OCI-LY7 (cell line): ENCODE measurements at regions of chr3 and their contacts with region 1.

Region 1: DNA sequence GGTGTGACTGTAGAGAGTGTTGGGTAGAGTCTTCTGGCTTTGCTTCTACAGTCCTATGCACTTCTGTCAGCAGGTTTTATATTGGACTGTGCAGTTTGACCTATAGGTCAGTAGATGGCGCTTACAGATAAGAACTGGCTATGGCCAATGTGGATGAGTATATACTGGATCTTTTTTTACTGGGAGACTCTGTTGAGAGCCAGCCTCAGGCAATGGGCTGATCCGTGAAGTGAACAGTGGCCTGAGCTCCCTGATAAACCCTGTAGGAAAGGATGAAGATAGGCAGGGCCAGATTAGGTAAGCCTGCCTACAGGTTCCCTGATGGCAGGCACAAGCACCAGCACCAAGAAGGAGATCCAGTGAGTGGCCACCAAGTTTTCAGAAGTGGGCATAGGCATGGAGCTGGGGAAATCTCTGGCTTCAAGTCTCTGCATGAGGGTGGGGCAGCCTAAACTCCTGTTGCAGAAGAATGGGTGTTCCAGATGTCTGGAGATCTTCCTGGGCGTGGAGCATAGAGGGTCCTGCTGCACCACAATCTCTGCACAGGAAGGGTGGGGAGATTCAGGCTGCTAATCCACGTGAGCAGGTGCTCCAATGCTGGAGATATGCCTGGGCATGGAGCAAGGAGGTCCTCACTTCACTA is 326.0 kb upstream of the SGO1 start:
- DNase-seq: peak; percentile 62
- H3K4me3 ChIP-seq: no peak overlapping the region
- H3K27ac ChIP-seq: no peak overlapping the region
- H3K4me1 ChIP-seq: no peaks in the 10 kb centered on the region
- CTCF ChIP-seq: peak; percentile 92

Region 2: GRCh38 chr3:20324714-20325478 is 187.1 kb before region 1 on chr3:
- CTCF ChIA-PET with region 1: no interaction called
- POLR2A ChIA-PET with region 1: no interaction called
- intact Hi-C with region 1: no loop called
- DNase-seq: peak; percentile 9
- H3K4me3 ChIP-seq: no peak overlapping the region
- H3K27ac ChIP-seq: no peak overlapping the region
- H3K4me1 ChIP-seq: no peaks in the 10 kb centered on the region
- CTCF ChIP-seq: no peak

Region 3: GRCh38 chr3:20930034-20930433 is 418.1 kb after region 1 on chr3:
- CTCF ChIA-PET with region 1: no interaction called
- POLR2A ChIA-PET with region 1: no interaction called
- intact Hi-C with region 1: loop called (anchors 2 kb)
- DNase-seq: peak; percentile 55
- H3K4me3 ChIP-seq: no peak overlapping the region
- H3K27ac ChIP-seq: no peak overlapping the region
- H3K4me1 ChIP-seq: no peaks in the 10 kb centered on the region
- CTCF ChIP-seq: peak; percentile 92

Region 4: DNA sequence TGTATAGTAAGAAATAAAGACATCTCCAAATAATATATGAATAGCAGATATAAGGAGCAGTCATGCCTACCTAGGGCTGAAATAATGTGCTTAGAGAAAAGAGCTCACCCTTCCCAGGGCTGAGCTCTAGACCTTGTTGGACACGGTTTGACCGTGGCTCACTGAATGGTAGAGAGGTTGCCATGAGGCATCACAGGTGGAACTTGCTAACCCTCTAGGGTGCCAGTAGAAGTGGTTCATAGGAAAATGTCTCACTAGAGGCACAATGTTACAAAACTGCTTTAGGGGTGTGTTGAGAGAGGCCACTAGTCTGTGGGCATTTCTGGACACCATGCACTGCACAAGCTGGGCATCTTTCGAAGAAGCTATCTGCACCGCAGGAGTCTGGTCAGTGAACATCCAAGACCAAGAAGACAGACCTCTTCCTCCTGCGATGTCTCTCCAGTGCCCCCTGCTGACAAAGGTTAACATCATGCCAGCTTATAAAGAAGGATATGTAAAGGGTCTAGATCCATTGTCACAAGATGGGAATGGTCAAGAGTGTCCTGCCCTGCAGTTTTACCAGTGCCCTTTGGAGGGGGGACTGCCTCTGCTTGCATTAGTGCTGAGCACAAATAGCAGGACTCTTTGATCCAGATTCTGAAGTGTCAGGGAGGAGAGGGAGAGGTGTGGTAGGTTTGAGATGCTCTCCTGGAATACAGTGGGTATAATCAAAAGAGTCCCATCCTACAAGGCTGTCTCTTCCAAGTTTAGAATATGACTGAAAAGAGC is 972.3 kb after region 1 on chr3:
- CTCF ChIA-PET with region 1: no interaction called
- POLR2A ChIA-PET with region 1: no interaction called
- intact Hi-C with region 1: loop called (anchors 2 kb)
- DNase-seq: peak; percentile 43
- H3K4me3 ChIP-seq: no peak overlapping the region
- H3K27ac ChIP-seq: no peak overlapping the region
- H3K4me1 ChIP-seq: no peaks in the 10 kb centered on the region
- CTCF ChIP-seq: peak; percentile 75

Region 5: DNA sequence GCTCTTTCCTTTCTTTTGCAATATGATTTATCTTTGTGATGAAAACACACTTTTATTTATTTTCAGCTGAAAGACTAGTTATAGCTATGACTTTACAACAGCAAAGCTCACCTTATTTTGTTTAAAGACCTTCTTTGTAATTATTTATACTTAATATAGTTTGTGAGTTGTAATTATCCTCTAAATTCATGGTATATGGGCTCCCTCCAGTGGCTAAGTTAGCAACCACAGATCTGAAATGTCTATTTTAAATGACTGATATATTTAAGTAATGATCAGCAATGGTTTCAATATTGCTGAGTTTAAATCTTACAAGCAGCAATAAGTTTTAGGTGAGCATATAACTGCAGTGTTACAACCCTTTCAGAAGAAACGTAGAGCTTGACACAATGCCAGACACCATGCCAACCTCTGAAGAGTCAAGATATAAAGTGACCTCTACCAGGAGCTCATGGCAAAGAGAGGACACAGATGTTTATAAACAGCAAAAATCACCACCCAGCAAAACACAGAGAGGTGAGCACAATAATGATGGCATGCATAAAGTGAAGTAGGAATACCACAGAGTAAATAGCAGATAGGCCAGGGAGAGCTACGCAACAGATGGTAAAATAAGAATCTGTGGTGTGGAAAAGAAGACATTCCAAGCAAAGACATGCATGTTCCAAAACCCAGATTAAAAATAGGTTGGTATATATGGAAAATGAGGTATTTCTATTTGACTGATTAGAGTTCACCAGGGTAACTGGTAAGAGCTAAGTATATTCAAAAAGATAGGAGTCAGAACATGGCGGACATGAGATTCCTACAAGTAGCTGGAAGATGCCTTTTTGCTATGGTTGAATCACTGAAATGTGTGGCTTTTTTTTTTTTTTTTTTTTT is 1382.7 kb after region 1 on chr3:
- CTCF ChIA-PET with region 1: no interaction called
- POLR2A ChIA-PET with region 1: no interaction called
- intact Hi-C with region 1: loop called (anchors 5 kb)
- DNase-seq: no peak
- H3K4me3 ChIP-seq: no peak overlapping the region
- H3K27ac ChIP-seq: no peak overlapping the region
- H3K4me1 ChIP-seq: no peaks in the 10 kb centered on the region
- CTCF ChIP-seq: peak; percentile 78

Region 6: GRCh38 chr3:22117751-22118346 is 1605.9 kb after region 1 on chr3:
- CTCF ChIA-PET with region 1: no interaction called
- POLR2A ChIA-PET with region 1: interaction called, 3 read pairs
- intact Hi-C with region 1: loop called (anchors 5 kb)
- DNase-seq: peak; percentile 38
- H3K4me3 ChIP-seq: no peak overlapping the region
- H3K27ac ChIP-seq: no peak overlapping the region
- H3K4me1 ChIP-seq: no peaks in the 10 kb centered on the region
- CTCF ChIP-seq: peak; percentile 88